Activated naive CD4-positive, alpha-beta T cell treated with anti-CD3 and anti-CD28 coated beads, Interleukin-2, amount 10 ng/mL, durations not matched to agents 7 days and 5 days (primary cell): ENCODE measurements at regions of chr3 and their contacts with region 1.

Region 1: GRCh38 chr3:59857589-59858346 is 807.9 kb upstream of the CFAP20DC start:
- DNase-seq: peak; percentile 86
- H3K4me3 Mint-ChIP-seq: no peak overlapping the region
- H3K27ac Mint-ChIP-seq: no peak overlapping the region
- H3K4me1 Mint-ChIP-seq: peaks cover 8% of the 10 kb centered on the region
- H3K27me3 Mint-ChIP-seq: no peaks in the 10 kb centered on the region

Region 2: GRCh38 chr3:59313365-59313764 is 544.4 kb before region 1 on chr3:
- CTCF ChIA-PET with region 1: interaction called, 12 read pairs
- DNase-seq: peak; percentile 58
- H3K4me3 Mint-ChIP-seq: no peak overlapping the region
- H3K27ac Mint-ChIP-seq: no peak overlapping the region
- H3K4me1 Mint-ChIP-seq: peaks cover 2% of the 10 kb centered on the region
- H3K27me3 Mint-ChIP-seq: peaks cover 5% of the 10 kb centered on the region

Region 3: GRCh38 chr3:59839810-59840515 is 17.8 kb before region 1 on chr3:
- CTCF ChIA-PET with region 1: no interaction called
- DNase-seq: no peak
- H3K4me3 Mint-ChIP-seq: no peak overlapping the region
- H3K27ac Mint-ChIP-seq: no peak overlapping the region
- H3K4me1 Mint-ChIP-seq: peaks cover 25% of the 10 kb centered on the region
- H3K27me3 Mint-ChIP-seq: no peaks in the 10 kb centered on the region